CD8-positive, alpha-beta memory T cell (primary cell): ENCODE measurements at regions of chr10 and their contacts with region 1.

Region 1: GRCh38 chr10:59625721-59626522 is 83.7 kb downstream of the SLC16A9 start:
- DNase-seq: peak in 4 of 5 donors; percentile 12 to 52 (median 47)
- H3K4me3 ChIP-seq: no peak overlapping the region
- H3K4me3 Mint-ChIP-seq: no peak overlapping the region
- H3K27ac ChIP-seq: no peak overlapping the region
- H3K27ac Mint-ChIP-seq: no peak overlapping the region
- H3K4me1 ChIP-seq: no peaks in the 10 kb centered on the region
- H3K4me1 Mint-ChIP-seq: peaks cover 0 to 4% (median 0%) of the 10 kb centered on the region in 3 donors
- H3K27me3 ChIP-seq: no peaks in the 10 kb centered on the region
- H3K27me3 Mint-ChIP-seq: peaks cover 6 to 8% of the 10 kb centered on the region in 2 donors

Region 2: GRCh38 chr10:59448616-59449015 is 177.3 kb before region 1 on chr10:
- CTCF ChIA-PET with region 1: no interaction called
- POLR2A ChIA-PET with region 1: no interaction called
- DNase-seq: no peak
- H3K4me3 ChIP-seq: no peak overlapping the region
- H3K4me3 Mint-ChIP-seq: no peak overlapping the region
- H3K27ac ChIP-seq: no peak overlapping the region
- H3K27ac Mint-ChIP-seq: no peak overlapping the region
- H3K4me1 ChIP-seq: no peaks in the 10 kb centered on the region
- H3K4me1 Mint-ChIP-seq: no peaks in the 10 kb centered on the region
- H3K27me3 ChIP-seq: no peaks in the 10 kb centered on the region
- H3K27me3 Mint-ChIP-seq: no peaks in the 10 kb centered on the region

Region 3: DNA sequence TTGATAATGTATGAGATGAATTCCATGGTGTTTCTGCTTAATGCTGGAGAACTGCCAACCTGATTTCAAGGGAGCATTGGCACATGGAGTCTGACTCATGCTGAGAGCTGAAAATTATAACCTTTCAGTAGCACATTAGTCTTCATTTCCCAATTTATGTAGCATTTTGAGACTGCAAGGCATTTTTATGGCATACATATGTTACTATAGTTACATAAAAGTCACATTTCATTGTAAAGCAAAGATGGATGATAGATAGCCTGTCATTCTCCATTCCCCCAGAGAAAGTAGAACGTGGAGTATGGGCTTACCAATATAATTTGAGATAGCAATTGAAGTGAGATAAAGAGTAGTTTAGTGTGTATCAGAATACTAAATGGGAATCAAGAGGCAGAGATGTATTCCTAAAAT is 19.4 kb before region 1 on chr10:
- CTCF ChIA-PET with region 1: no interaction called
- POLR2A ChIA-PET with region 1: no interaction called
- DNase-seq: no peak
- H3K4me3 ChIP-seq: no peak overlapping the region
- H3K4me3 Mint-ChIP-seq: no peak overlapping the region
- H3K27ac ChIP-seq: no peak overlapping the region
- H3K27ac Mint-ChIP-seq: no peak overlapping the region
- H3K4me1 ChIP-seq: no peaks in the 10 kb centered on the region
- H3K4me1 Mint-ChIP-seq: no peaks in the 10 kb centered on the region
- H3K27me3 ChIP-seq: no peaks in the 10 kb centered on the region
- H3K27me3 Mint-ChIP-seq: peaks cover 0 to 3% of the 10 kb centered on the region in 2 donors

Region 4: DNA sequence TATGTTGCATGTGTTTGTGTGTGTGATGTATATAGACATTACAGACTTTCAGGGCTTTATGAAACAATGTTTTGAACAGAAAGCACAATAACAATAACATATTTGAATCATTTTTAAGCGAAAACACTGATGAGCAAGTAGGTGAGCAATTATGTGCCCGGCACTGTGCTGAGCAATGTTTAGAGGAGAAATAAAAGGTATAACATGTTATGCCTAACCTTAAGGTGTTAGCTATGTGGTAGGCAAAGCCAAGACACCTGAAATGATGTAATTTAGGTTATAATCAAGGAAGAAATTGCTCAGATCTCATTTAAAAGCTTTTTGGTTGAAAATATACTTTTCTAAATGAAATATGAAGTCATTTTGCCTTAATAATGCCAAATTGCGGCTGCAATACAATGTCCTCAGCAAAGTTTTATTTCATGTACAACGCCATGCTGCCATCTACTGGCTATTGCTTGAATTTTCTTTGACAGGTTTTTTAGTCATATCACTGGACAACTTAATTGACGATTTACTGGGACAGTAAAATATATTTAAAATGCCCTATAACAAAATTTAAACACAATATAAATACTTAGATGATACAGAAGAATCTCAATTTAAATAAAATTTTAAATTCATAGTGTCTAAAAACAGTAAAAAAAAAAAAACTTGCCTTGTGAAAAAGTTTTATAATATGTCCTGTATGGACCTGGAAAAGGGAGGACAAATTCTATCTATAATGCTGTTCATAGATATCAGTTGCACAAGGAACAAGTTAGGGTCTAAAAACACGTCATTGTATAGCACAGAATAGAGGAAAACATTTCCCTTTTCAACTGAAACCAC is 1021.3 kb after region 1 on chr10:
- CTCF ChIA-PET with region 1: interaction called, 23 read pairs
- POLR2A ChIA-PET with region 1: no interaction called
- DNase-seq: peak in 3 of 5 donors; percentile 13 to 41 (median 30)
- H3K4me3 ChIP-seq: no peak overlapping the region
- H3K4me3 Mint-ChIP-seq: no peak overlapping the region
- H3K27ac ChIP-seq: no peak overlapping the region
- H3K27ac Mint-ChIP-seq: peak overlapping the region in 2 of 8 donors; percentile 2 to 48
- H3K4me1 ChIP-seq: peaks cover 14% of the 10 kb centered on the region
- H3K4me1 Mint-ChIP-seq: peaks cover 0 to 45% (median 5%) of the 10 kb centered on the region in 3 donors
- H3K27me3 ChIP-seq: no peaks in the 10 kb centered on the region
- H3K27me3 Mint-ChIP-seq: no peaks in the 10 kb centered on the region